ENCODE measurements at regions of chr10 and their contacts with region 1.

Region 1: GRCh38 chr10:34994565-34995142 is 95.5 kb downstream of the CUL2 start:
- DNase-seq: peak; percentile 100
- ATAC-seq: peak; percentile 84
- H3K4me3 ChIP-seq: no peak overlapping the region
- H3K27ac ChIP-seq: 0 out of 2 replicates have a peak overlapping the region, but pooled peaks have one; percentile 1
- H3K4me1 ChIP-seq: peaks cover 33% of the 10 kb centered on the region
- H3K27me3 ChIP-seq: no peaks in the 10 kb centered on the region
- CTCF ChIP-seq: peak; percentile 100

Region 2: GRCh38 chr10:34696423-34696822 is 298.2 kb before region 1 on chr10:
- CTCF ChIA-PET with region 1: interaction called, 10 read pairs
- POLR2A ChIA-PET with region 1: no interaction called
- intact Hi-C with region 1: no loop called
- DNase-seq: peak; percentile 99
- ATAC-seq: peak; percentile 74
- H3K4me3 ChIP-seq: no peak overlapping the region
- H3K27ac ChIP-seq: peak overlapping the region; percentile 0; the same call in 1 of the 2 replicates
- H3K4me1 ChIP-seq: peaks cover 57% of the 10 kb centered on the region
- H3K27me3 ChIP-seq: no peaks in the 10 kb centered on the region
- CTCF ChIP-seq: no peak

Region 3: DNA sequence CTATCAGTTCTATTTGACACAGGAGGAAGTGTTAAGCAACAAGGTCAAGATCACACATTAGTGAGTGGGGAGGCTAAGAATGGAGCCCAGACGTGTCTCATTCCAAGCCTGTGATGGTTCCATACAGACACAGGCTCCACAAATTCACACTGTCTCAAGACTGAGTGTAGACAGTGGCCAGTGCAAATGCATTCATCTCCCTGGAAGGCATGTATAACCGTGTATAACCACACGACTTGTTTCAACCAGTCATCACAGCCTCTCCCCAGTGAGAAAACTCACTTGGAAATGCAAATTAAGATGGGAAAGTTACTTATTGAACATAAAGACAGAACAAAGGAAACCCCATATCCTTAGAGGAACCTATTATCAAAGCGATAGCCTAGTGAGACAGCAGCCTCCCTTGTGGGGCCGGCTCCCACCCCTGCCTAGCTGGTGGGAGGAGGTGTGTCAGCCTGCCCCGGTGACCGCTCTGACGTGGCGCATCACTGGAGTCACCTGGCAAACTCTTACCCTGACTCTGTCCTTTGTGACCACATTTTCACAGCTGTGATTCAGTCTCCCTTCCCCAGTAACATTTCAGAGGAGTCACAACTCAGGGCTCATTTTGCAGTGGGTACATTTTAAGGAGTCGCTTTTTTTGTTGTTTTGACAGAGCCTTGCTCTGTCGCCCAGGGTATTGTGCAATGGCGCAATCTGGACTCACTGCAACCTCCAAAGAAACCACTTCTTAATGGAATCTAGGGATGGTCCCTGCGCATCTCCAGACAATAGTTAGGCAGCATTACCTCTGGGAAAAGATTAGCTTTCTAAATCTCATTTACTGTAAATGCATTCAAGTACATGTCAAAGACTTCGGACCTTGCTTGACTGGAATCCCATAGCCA is 52.9 kb before region 1 on chr10:
- CTCF ChIA-PET with region 1: no interaction called
- POLR2A ChIA-PET with region 1: no interaction called
- intact Hi-C with region 1: no loop called
- DNase-seq: no peak
- ATAC-seq: no peak
- H3K4me3 ChIP-seq: no peak overlapping the region
- H3K27ac ChIP-seq: no peak overlapping the region
- H3K4me1 ChIP-seq: peaks cover 8% of the 10 kb centered on the region
- H3K27me3 ChIP-seq: no peaks in the 10 kb centered on the region
- CTCF ChIP-seq: no peak

Region 4: GRCh38 chr10:35015843-35016408 is 21.3 kb after region 1 on chr10:
- CTCF ChIA-PET with region 1: interaction called, 12 read pairs
- POLR2A ChIA-PET with region 1: no interaction called
- intact Hi-C with region 1: no loop called
- DNase-seq: peak; percentile 59
- ATAC-seq: peak; percentile 44
- H3K4me3 ChIP-seq: no peak overlapping the region
- H3K27ac ChIP-seq: peak overlapping the region; percentile 25
- H3K4me1 ChIP-seq: peaks cover 29% of the 10 kb centered on the region
- H3K27me3 ChIP-seq: no peaks in the 10 kb centered on the region
- CTCF ChIP-seq: no peak

Region 5: DNA sequence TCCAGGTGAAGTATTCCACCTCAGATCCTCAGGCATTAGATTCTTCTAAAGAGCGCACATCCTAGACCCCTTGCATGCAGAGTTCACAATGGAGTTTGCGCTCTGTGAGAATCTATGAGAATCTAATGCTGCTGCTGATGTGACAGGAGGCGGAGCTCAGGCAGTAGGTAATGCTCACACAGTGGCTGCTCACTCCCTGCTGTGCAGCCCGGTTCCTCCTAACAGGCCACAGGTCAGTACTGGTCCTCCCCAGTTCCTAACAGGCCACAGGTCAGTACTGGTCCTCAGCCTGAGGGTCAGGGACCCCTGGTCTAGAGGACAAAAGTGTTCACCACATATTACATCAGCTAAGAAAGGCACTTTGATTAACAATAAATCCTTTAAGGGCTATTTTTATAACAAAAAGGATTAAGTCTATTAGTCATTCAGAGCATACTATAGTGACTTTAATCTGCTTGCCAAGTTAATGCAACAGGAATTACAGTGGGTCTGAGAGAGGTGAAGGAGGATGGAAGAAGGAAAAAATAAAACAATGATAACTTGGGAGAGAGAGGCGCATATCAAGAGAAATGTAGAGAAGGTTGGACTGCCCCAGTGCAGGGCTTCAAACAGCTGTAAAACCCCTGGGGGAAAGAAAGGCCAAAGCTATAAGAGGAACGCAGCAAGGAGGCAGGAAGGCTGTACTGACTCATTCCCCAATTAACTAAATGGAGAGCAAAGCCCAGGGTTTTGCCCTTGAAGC is 46.3 kb after region 1 on chr10:
- CTCF ChIA-PET with region 1: interaction called, 13 read pairs
- POLR2A ChIA-PET with region 1: no interaction called
- intact Hi-C with region 1: loop called (anchors 1 kb)
- DNase-seq: peak; percentile 72
- ATAC-seq: peak; percentile 77
- H3K4me3 ChIP-seq: no peak overlapping the region
- H3K27ac ChIP-seq: peak overlapping the region; percentile 49
- H3K4me1 ChIP-seq: peaks cover 46% of the 10 kb centered on the region
- H3K27me3 ChIP-seq: no peaks in the 10 kb centered on the region
- CTCF ChIP-seq: no peak

Region 6: GRCh38 chr10:35195361-35196306 is 201.0 kb after region 1 on chr10:
- CTCF ChIA-PET with region 1: interaction called, 38 read pairs
- POLR2A ChIA-PET with region 1: interaction called, 3 read pairs
- intact Hi-C with region 1: loop called (anchors 5 kb)
- DNase-seq: peak; percentile 99
- ATAC-seq: peak; percentile 96
- H3K4me3 ChIP-seq: peak overlapping the region; percentile 60
- H3K27ac ChIP-seq: peak overlapping the region; percentile 78
- H3K4me1 ChIP-seq: peaks cover 17% of the 10 kb centered on the region
- H3K27me3 ChIP-seq: no peaks in the 10 kb centered on the region
- CTCF ChIP-seq: peak; percentile 100

Region 7: GRCh38 chr10:35517431-35518181 is 523.0 kb after region 1 on chr10:
- CTCF ChIA-PET with region 1: no interaction called
- POLR2A ChIA-PET with region 1: no interaction called
- intact Hi-C with region 1: no loop called
- DNase-seq: peak; percentile 34
- ATAC-seq: peak; percentile 29; the same call in 1 of the 2 replicates
- H3K4me3 ChIP-seq: no peak overlapping the region
- H3K27ac ChIP-seq: no peak overlapping the region
- H3K4me1 ChIP-seq: peaks cover 6% of the 10 kb centered on the region
- H3K27me3 ChIP-seq: no peaks in the 10 kb centered on the region
- CTCF ChIP-seq: no peak

Measured in PC-3 (cell line).